ENCODE measurements at regions of chr12 and their contacts with region 1.

Region 1: DNA sequence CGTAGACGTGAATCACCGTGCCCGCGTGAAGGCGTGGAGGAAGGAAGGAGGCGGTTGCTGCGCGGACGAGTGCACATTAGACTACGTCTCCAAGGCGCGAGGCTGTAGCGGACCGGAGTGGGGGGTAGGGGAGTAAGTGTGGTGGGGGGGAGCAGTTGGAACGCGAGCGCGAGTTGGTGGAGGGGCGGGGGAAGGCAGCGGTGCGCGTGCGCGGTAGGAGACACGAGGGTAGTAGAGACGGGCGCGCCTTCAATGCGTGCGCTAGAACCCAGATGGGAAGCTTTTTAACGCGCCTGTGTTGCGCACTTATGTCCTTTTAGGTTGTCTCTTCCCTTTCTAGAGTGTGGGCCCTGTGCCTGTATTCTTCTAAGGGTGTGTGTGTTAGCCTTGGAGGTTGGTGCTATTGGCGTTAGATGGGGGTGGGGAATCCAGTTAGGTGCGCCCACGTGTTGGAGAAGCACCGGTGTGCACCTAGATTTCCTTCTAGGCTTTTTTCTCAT is 604 bp downstream of the EIF4B start:
- DNase-seq: peak; percentile 55
- ATAC-seq: peak; percentile 41
- H3K4me3 ChIP-seq: peak overlapping the region; percentile 90
- H3K27ac ChIP-seq: peak overlapping the region; percentile 95
- H3K4me1 ChIP-seq: peaks cover 7% of the 10 kb centered on the region
- H3K27me3 ChIP-seq: no peaks in the 10 kb centered on the region
- CTCF ChIP-seq: no peak
- POLR2A ChIP-seq: peak; percentile 55
- RAD21 ChIP-seq: no peak

Region 2: DNA sequence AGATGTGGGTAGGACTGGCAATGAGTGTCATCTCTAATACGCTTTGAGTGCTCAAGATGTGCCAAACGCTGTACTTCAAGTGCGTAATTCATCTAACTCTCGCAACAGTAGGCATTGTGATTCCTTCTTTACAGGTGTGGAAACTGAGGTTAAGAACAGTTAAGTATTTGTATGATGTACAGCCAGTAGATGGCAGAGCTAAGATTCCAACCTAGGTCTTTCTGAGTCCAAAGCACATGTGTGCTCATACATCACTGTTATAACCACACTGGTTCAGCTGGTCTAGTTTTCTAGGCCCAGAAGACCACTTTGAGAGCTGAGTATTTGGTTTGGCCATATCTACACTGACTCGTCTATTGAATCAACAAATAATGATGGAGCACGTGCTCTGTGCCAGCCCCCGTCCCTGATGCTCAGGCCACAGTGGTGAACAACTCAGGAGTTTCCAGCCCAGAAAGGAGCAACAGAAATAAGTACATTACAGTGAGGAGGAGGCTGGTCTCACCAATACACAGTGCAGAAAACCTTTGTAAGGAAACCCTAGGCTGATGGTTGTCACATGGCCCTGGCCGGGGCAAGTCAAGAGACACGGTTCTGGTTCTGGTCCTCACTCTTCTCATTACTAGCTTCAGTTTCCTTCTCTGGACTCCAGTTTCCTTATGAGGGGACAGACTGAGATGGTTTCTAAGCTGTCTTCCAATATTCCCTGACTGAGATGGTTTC is 1485.1 kb before region 1 on chr12:
- CTCF ChIA-PET with region 1: no interaction called
- POLR2A ChIA-PET with region 1: interaction called, 12 read pairs
- dilution Hi-C with region 1: no loop called
- in situ Hi-C with region 1: no loop called
- intact Hi-C with region 1: no loop called
- DNase-seq: peak; percentile 29
- ATAC-seq: no peak
- H3K4me3 ChIP-seq: no peak overlapping the region
- H3K27ac ChIP-seq: no peak overlapping the region
- H3K4me1 ChIP-seq: no peaks in the 10 kb centered on the region
- H3K27me3 ChIP-seq: peaks cover 2% of the 10 kb centered on the region; the same call in 1 of the 2 replicates
- CTCF ChIP-seq: 0 out of 2 replicates have a peak, but pooled peaks have one; percentile 30
- POLR2A ChIP-seq: no peak
- RAD21 ChIP-seq: no peak

Region 3: DNA sequence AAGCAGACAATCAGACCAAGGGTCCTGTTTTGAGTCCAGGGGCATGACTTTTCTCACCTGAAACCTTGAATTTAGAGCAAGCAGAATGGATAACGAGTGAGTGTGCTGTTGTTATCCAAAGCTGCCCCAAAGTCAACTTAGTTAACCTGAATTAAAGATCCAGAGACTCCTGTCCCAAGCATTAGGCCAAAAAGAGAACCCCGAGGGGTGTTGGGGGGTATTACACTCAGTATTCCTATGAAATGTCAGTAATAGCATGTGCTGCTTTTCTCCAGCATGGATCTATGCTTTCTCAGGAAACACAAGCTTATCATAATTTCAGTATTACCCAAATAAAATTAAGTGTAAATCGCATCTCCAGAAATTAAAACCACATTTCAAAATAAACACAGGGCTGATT is 18.4 kb after region 1 on chr12:
- CTCF ChIA-PET with region 1: no interaction called
- POLR2A ChIA-PET with region 1: interaction called, 17 read pairs
- dilution Hi-C with region 1: no loop called
- in situ Hi-C with region 1: no loop called
- intact Hi-C with region 1: no loop called
- DNase-seq: no peak
- ATAC-seq: no peak
- H3K4me3 ChIP-seq: no peak overlapping the region
- H3K27ac ChIP-seq: no peak overlapping the region
- H3K4me1 ChIP-seq: no peaks in the 10 kb centered on the region
- H3K27me3 ChIP-seq: no peaks in the 10 kb centered on the region
- CTCF ChIP-seq: no peak
- POLR2A ChIP-seq: no peak
- RAD21 ChIP-seq: no peak

Measured in IMR-90 (cell line).